Mammary epithelial cell (primary cell): ENCODE measurements at regions of chr6 and their contacts with region 1.

Region 1: GRCh38 chr6:14216946-14217684 is 99.5 kb downstream of the CD83 start:
- DNase-seq: no peak
- H3K4me3 ChIP-seq: no peak overlapping the region
- H3K27ac ChIP-seq: no peak overlapping the region
- H3K4me1 ChIP-seq: peaks cover 2% of the 10 kb centered on the region
- H3K27me3 ChIP-seq: no peaks in the 10 kb centered on the region
- CTCF ChIP-seq: no peak

Region 2: GRCh38 chr6:14252271-14252850 is 35.2 kb after region 1 on chr6:
- CTCF ChIA-PET with region 1: no interaction called
- dilution Hi-C with region 1: no loop called
- in situ Hi-C with region 1: no loop called
- intact Hi-C with region 1: no loop called
- DNase-seq: no peak
- H3K4me3 ChIP-seq: no peak overlapping the region
- H3K27ac ChIP-seq: no peak overlapping the region
- H3K4me1 ChIP-seq: no peaks in the 10 kb centered on the region
- H3K27me3 ChIP-seq: no peaks in the 10 kb centered on the region
- CTCF ChIP-seq: no peak

Region 3: DNA sequence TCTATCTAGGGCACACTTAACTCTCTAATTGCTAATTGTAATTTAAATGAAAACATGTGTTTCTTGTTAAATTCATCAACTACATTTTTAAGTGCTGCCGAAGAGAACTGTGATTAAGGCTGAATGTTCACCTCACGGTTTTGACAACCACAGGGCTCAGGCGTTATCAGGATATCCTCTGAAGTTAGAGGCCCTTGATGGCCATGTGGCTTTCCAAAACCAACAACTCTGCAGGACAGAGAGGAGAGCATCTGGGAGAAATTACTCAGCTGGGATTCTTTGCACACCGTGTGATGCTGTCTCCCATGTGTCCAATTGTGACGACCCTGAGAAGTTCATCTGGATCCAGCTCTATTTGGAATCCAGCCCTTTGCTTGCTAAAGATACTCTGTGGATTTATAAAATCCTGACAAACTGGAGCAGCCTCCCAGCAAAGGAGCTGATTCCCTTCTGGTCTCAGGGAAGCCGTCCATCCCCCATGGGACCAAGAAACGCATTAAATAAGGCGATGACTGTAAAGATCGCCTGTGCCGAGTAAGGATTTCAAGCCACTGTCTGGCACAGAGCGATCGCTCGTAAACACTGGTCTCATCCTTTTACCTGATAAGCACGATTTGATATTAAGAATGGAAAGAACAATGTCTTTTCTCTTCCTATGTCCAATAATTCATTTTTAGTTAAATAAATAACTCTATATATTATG is 301.6 kb after region 1 on chr6:
- CTCF ChIA-PET with region 1: no interaction called
- dilution Hi-C with region 1: no loop called
- in situ Hi-C with region 1: no loop called
- intact Hi-C with region 1: no loop called
- DNase-seq: no peak
- H3K4me3 ChIP-seq: no peak overlapping the region
- H3K27ac ChIP-seq: no peak overlapping the region
- H3K4me1 ChIP-seq: no peaks in the 10 kb centered on the region
- H3K27me3 ChIP-seq: no peaks in the 10 kb centered on the region
- CTCF ChIP-seq: no peak

Region 4: GRCh38 chr6:15370733-15371671 is 1153.9 kb after region 1 on chr6:
- CTCF ChIA-PET with region 1: interaction called, 13 read pairs
- dilution Hi-C with region 1: no loop called
- in situ Hi-C with region 1: no loop called
- intact Hi-C with region 1: no loop called
- DNase-seq: peak; percentile 87
- H3K4me3 ChIP-seq: no peak overlapping the region
- H3K27ac ChIP-seq: peak overlapping the region; percentile 21
- H3K4me1 ChIP-seq: peaks cover 28% of the 10 kb centered on the region
- H3K27me3 ChIP-seq: no peaks in the 10 kb centered on the region
- CTCF ChIP-seq: no peak